ENCODE measurements at regions of chr2 and their contacts with region 1.

Region 1: DNA sequence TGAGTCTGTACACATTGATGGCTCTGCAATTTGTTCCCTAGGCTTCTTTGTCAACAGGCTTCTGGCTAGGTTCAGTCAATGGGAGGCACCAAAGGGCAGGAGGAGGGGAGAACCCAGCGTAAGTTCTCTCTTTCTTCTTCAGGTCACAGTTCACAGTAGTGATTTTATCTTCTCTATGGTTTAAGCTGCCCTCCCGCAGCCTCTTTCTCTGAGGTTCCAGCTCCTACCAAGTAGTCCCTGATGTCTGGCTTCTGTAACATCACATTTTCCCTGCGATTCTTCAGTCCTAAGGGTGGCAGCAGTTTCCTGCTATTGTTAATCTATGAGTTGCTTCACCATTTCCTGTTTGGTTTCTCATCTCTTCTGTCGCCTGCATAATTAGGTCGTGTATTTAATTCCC is 107.4 kb downstream of the CPO start:
- DNase-seq: no peak
- ATAC-seq: no peak
- H3K4me3 ChIP-seq: no peak overlapping the region
- H3K27ac ChIP-seq: no peak overlapping the region
- H3K4me1 ChIP-seq: peaks cover 2 to 6% of the 10 kb centered on the region in 2 donors
- H3K27me3 ChIP-seq: no peaks in the 10 kb centered on the region

Region 2: GRCh38 chr2:207086136-207086535 is 39.4 kb after region 1 on chr2:
- intact Hi-C with region 1: loop called in 1 of 2 experiments (anchors 5 kb)
- DNase-seq: no peak
- ATAC-seq: no peak
- H3K4me3 ChIP-seq: no peak overlapping the region
- H3K27ac ChIP-seq: peak overlapping the region in 1 of 2 donors; percentile 33
- H3K4me1 ChIP-seq: peaks cover 0 to 11% of the 10 kb centered on the region in 2 donors
- H3K27me3 ChIP-seq: no peaks in the 10 kb centered on the region

Region 3: DNA sequence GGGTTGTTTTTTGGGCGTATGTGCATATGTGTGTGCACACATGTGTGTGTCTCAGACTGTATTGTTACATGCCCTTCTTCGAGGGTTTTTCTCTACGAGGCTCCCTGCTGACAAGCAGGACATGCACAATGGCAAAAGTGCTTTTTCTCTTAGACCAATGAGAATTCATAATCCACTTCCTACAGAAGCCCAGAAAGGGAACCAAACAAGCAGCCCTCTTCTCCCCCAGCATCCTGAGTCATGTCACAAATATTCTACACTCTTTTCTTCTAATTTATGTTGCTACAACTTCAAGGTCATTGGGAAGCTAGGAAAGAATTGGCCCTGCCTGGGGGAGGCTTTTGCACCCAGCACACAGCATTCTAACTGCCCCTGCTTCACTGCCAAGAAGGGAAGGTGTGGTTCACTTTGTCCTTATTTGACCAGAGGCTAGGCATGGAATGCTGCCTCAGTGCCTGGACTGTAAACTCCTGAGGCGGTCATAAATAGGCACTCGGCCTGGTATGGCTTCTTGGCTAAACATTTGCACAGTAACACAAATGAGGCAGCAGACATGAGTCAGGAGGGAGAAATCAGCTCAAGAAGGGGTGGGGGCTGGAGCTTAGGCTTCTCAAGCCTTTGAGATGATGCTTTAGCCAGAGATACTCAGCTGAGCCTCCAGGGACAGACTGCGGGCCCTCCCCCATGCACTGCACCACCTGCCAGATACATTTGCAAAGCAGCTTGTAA is 211.7 kb after region 1 on chr2:
- intact Hi-C with region 1: loop called in 1 of 2 experiments (anchors 10 kb)
- DNase-seq: peak; percentile 87 to 88
- ATAC-seq: peak; percentile 85
- H3K4me3 ChIP-seq: no peak overlapping the region
- H3K27ac ChIP-seq: peak overlapping the region; percentile 36 to 83
- H3K4me1 ChIP-seq: peaks cover 0 to 2% of the 10 kb centered on the region in 2 donors
- H3K27me3 ChIP-seq: no peaks in the 10 kb centered on the region

Region 4: GRCh38 chr2:207473049-207473930 is 426.6 kb after region 1 on chr2:
- intact Hi-C with region 1: loop called in 1 of 2 experiments (anchors 10 kb)
- DNase-seq: no peak
- ATAC-seq: peak; percentile 79
- H3K4me3 ChIP-seq: peak overlapping the region in 1 of 2 donors; percentile 2
- H3K27ac ChIP-seq: no peak overlapping the region
- H3K4me1 ChIP-seq: peaks cover 0 to 2% of the 10 kb centered on the region in 2 donors
- H3K27me3 ChIP-seq: no peaks in the 10 kb centered on the region